Heart left ventricle (tissue), 16 donors: ENCODE measurements at regions of chr15 and their contacts with region 1.

Region 1: DNA sequence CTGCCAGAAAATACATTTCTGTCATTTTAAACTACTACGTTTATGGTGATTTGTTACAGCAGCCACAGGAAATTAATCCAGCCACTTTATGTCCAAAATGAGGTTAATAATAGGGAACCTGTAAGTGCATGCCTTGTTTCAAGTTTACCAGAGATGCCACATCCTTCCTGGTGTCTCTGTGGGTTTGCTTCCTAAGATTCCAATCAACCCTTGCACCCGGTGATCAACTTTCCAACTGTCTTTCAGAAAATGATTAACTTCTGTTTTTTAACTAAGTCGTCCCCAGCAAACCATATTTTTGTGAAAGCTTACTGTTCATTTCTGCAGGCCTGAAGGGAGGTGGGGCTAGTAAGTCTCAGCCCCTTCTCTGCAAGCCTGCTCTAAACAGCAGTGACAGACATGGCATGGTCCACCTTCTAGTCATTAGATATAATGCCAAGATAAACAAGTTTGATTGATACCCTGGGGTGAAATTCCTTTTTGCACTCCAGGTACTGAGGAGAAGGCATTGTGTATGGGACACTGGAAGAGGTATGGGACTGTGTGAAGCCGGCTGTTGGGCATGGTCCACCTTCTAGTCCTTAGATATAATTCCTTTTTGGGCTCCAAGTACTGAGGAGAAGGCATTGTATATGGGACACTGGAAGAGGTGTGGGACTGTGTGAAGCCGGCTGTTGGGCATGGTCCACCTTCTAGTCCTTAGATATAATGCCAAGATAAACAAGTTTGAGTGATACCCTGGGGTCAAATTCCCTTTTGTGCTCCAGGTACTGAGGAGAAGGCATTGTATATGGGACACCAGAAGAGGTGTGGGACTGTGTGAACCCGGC is 11.1 kb upstream of the TMC3 start:
- DNase-seq: no peak
- ATAC-seq: no peak
- H3K4me3 ChIP-seq: no peak overlapping the region
- H3K27ac ChIP-seq: no peak overlapping the region
- H3K4me1 ChIP-seq: no peaks in the 10 kb centered on the region
- H3K27me3 ChIP-seq: no peaks in the 10 kb centered on the region
- CTCF ChIP-seq: no peak
- POLR2A ChIP-seq: no peak

Region 2: DNA sequence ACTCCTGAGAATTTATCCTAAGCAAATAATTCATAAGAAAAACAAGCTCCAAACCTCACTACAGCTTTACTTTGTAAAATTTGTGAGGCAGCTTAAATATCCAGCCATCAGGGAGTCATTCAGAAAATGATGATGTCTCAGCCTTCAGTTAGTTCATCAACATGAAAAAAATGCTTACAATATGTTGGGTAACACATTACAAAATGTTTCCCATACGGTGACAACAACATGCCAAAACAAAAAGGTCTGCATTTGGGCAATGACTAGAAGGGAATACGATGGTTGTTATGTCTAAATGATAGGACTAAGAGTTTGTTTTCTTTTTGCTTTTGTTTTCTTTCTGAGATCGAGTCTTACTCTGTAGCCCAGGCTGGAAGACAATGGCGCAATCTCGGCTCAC is 298.0 kb before region 1 on chr15:
- intact Hi-C with region 1: no loop called
- DNase-seq: no peak
- ATAC-seq: no peak
- H3K4me3 ChIP-seq: no peak overlapping the region
- H3K27ac ChIP-seq: no peak overlapping the region
- H3K4me1 ChIP-seq: peaks cover 0 to 14% (median 3%) of the 10 kb centered on the region in 12 donors
- H3K27me3 ChIP-seq: no peaks in the 10 kb centered on the region
- CTCF ChIP-seq: no peak
- POLR2A ChIP-seq: no peak

Region 3: GRCh38 chr15:81346611-81347010 is 38.5 kb before region 1 on chr15:
- intact Hi-C with region 1: loop called in 1 of 10 experiments (anchors 5 kb)
- DNase-seq: no peak
- ATAC-seq: no peak
- H3K4me3 ChIP-seq: no peak overlapping the region
- H3K27ac ChIP-seq: no peak overlapping the region
- H3K4me1 ChIP-seq: no peaks in the 10 kb centered on the region
- H3K27me3 ChIP-seq: no peaks in the 10 kb centered on the region
- CTCF ChIP-seq: no peak
- POLR2A ChIP-seq: no peak